Psoas muscle (tissue), 8 donors: ENCODE measurements at regions of chr1 and their contacts with region 1.

Region 1: GRCh38 chr1:20212685-20213331 is 26.5 kb upstream of the PLA2G2C start:
- DNase-seq: peak; percentile 55 to 81
- ATAC-seq: peak; percentile 54 to 89 (median 78)
- H3K4me3 ChIP-seq: peak overlapping the region; percentile 32
- H3K27ac ChIP-seq: no peak overlapping the region
- H3K4me1 ChIP-seq: peaks cover 4% of the 10 kb centered on the region
- H3K27me3 ChIP-seq: peaks cover 0 to 20% (median 0%) of the 10 kb centered on the region in 3 donors
- CTCF ChIP-seq: peak; percentile 73

Region 2: GRCh38 chr1:19990689-19991088 is 222.1 kb before region 1 on chr1:
- intact Hi-C with region 1: no loop called
- DNase-seq: no peak
- ATAC-seq: no peak
- H3K4me3 ChIP-seq: no peak overlapping the region
- H3K27ac ChIP-seq: no peak overlapping the region
- H3K4me1 ChIP-seq: no peaks in the 10 kb centered on the region
- H3K27me3 ChIP-seq: peaks cover 0 to 66% (median 6%) of the 10 kb centered on the region in 3 donors
- CTCF ChIP-seq: no peak

Region 3: GRCh38 chr1:20047096-20047495 is 165.7 kb before region 1 on chr1:
- intact Hi-C with region 1: no loop called
- DNase-seq: no peak
- ATAC-seq: no peak
- H3K4me3 ChIP-seq: no peak overlapping the region
- H3K27ac ChIP-seq: no peak overlapping the region
- H3K4me1 ChIP-seq: no peaks in the 10 kb centered on the region
- H3K27me3 ChIP-seq: peaks cover 0 to 9% (median 0%) of the 10 kb centered on the region in 3 donors
- CTCF ChIP-seq: no peak

Region 4: GRCh38 chr1:20371411-20371810 is 158.6 kb after region 1 on chr1:
- intact Hi-C with region 1: loop called in 1 of 2 experiments (anchors 5 kb)
- DNase-seq: no peak
- ATAC-seq: no peak
- H3K4me3 ChIP-seq: no peak overlapping the region
- H3K27ac ChIP-seq: no peak overlapping the region
- H3K4me1 ChIP-seq: peaks cover 5% of the 10 kb centered on the region
- H3K27me3 ChIP-seq: peaks cover 0 to 30% (median 6%) of the 10 kb centered on the region in 3 donors
- CTCF ChIP-seq: no peak

Region 5: DNA sequence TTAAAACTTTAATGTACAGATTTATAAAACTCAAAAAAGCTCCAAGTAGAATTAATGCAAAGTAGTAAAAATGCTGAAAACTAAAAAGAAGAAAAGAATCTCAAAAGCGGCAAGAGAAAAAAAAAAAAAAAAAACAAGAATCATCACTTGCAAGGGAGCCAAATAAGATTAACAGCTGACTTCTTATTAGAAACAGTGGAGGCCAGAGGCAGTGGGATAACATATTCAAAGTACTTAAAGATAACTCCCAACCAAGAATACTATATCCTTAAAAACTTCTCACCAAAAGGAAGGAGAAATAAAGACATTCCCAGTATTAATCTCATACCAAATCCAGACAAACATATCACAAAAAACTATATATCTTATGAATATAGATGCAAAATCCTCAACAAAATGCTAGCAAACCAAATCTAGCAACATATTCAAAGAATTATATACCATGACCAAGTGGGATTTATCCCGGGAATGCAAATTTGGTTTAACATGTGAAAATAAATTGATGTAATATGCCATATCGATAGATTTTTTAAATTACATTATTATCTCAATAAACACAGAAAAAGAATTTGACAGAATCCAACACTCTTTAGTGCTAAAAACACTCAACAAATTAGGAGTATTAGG is 210.5 kb after region 1 on chr1:
- intact Hi-C with region 1: loop called in 1 of 2 experiments (anchors 5 kb)
- DNase-seq: no peak
- ATAC-seq: no peak
- H3K4me3 ChIP-seq: no peak overlapping the region
- H3K27ac ChIP-seq: no peak overlapping the region
- H3K4me1 ChIP-seq: no peaks in the 10 kb centered on the region
- H3K27me3 ChIP-seq: peaks cover 0 to 16% (median under 1%) of the 10 kb centered on the region in 3 donors
- CTCF ChIP-seq: no peak

Region 6: GRCh38 chr1:20430355-20431175 is 217.8 kb after region 1 on chr1:
- intact Hi-C with region 1: loop called (anchors 5 to 10 kb)
- DNase-seq: no peak
- ATAC-seq: peak in 1 of 4 donors; percentile 38
- H3K4me3 ChIP-seq: no peak overlapping the region
- H3K27ac ChIP-seq: no peak overlapping the region
- H3K4me1 ChIP-seq: no peaks in the 10 kb centered on the region
- H3K27me3 ChIP-seq: peaks cover 0 to 28% (median 0%) of the 10 kb centered on the region in 3 donors
- CTCF ChIP-seq: peak; percentile 54

Region 7: DNA sequence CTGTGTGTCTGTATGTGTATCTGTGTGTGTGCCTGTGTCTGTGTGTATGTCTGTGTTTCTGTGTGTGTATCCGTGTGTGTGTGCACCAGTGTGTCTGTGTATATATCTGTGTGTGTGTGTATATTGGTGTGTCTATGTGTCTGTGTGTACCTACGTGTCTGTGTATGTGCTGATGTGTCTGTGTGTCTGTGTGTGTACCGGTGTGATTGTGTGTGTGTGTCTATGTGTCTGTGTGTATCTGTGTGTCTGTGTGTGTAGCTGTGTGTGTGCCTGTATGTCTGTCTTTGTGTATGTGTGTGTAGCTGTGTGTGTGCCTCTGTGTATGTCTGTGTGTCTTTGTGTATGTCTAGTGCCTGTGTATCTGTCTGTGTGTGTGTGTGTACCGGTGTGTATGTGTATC is 241.2 kb after region 1 on chr1:
- intact Hi-C with region 1: no loop called
- DNase-seq: no peak
- ATAC-seq: no peak
- H3K4me3 ChIP-seq: no peak overlapping the region
- H3K27ac ChIP-seq: no peak overlapping the region
- H3K4me1 ChIP-seq: no peaks in the 10 kb centered on the region
- H3K27me3 ChIP-seq: peaks cover 0 to 38% (median 9%) of the 10 kb centered on the region in 3 donors
- CTCF ChIP-seq: no peak